Mammary epithelial cell (primary cell): ENCODE measurements at regions of chr13 and their contacts with region 1.

Region 1: DNA sequence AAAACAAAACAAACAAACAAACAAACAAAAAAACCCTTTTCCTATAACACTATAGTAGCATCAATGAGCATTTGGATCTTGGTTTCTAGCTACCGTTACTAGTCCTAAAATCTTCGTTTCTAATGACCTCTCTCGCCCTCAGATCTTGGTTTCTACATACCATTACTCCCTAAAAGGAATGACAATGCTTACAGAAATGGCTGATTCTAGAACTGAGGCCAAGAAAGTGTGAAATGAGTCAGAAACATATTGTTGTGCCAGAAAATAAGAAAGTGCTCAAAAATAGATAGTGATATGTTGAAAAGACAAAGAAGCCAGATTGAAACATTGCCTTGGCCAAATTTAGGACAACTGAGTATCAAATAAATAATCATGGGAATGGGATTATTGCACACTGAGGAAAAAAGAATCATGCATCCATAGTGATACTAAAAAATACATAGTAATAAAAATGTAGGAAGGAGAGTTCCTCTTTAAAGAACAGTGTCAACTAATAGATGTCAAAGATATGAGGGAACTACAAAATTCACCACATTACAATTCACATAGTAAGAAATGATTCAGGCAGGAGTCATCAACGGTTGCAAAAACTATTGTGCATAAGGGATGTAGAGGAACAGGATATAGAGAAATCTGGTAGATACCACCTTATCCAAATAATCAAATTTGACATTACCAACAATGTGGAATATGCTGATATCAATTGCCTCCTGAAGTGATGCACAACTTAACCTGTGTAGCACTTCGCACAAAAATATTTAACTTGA is 386.6 kb downstream of the DIAPH3 start:
- DNase-seq: peak; percentile 80
- H3K4me3 ChIP-seq: no peak overlapping the region
- H3K27ac ChIP-seq: peak overlapping the region; percentile 80
- H3K4me1 ChIP-seq: peaks cover 38% of the 10 kb centered on the region
- H3K27me3 ChIP-seq: no peaks in the 10 kb centered on the region
- CTCF ChIP-seq: no peak

Region 2: DNA sequence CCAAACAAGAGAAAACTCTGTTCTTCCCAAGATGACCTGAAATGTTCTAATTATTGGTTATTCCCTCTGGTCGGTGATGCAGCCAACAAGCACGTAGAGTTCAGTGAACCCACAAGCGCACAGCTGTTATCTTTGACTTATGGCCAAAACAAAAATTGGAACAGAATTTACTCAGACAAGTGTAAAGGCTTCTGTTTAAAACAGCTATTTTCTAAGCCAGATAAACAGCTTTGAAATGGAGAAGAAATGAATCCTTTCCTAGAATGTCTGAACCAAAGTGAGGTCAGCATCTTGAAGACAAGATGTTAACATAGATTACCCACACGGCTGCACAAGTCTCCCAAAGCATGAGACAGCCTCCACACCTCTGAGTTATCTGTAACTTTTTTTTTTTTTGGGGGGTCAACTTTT is 282.5 kb before region 1 on chr13:
- CTCF ChIA-PET with region 1: no interaction called
- dilution Hi-C with region 1: no loop called
- in situ Hi-C with region 1: no loop called
- intact Hi-C with region 1: no loop called
- DNase-seq: no peak
- H3K4me3 ChIP-seq: no peak overlapping the region
- H3K27ac ChIP-seq: no peak overlapping the region
- H3K4me1 ChIP-seq: no peaks in the 10 kb centered on the region
- H3K27me3 ChIP-seq: no peaks in the 10 kb centered on the region
- CTCF ChIP-seq: no peak

Region 3: GRCh38 chr13:59906413-59907049 is 129.4 kb after region 1 on chr13:
- CTCF ChIA-PET with region 1: no interaction called
- dilution Hi-C with region 1: no loop called
- in situ Hi-C with region 1: no loop called
- intact Hi-C with region 1: loop called (anchors 1 kb)
- DNase-seq: no peak
- H3K4me3 ChIP-seq: no peak overlapping the region
- H3K27ac ChIP-seq: no peak overlapping the region
- H3K4me1 ChIP-seq: no peaks in the 10 kb centered on the region
- H3K27me3 ChIP-seq: no peaks in the 10 kb centered on the region
- CTCF ChIP-seq: peak; percentile 41 to 72

Region 4: DNA sequence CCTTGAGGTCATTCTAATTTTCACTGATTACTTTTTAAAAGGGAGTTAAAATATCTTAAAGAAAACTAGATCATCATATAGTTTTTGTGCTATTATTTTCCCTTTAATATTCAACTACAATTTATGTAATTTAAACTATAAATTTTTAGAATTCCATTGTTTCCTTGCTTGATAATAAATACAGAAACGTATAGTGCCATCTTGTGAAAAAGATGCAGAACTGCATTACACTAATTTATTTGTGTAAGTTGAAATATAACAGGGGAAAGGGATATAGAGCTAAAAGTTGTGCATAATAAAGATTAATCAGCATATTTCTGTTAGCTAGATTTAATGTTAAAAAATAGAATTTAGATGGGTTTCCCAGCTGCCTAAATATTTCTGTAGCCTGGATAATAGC is 558.4 kb after region 1 on chr13:
- CTCF ChIA-PET with region 1: no interaction called
- dilution Hi-C with region 1: no loop called
- in situ Hi-C with region 1: no loop called
- intact Hi-C with region 1: no loop called
- DNase-seq: no peak
- H3K4me3 ChIP-seq: no peak overlapping the region
- H3K27ac ChIP-seq: no peak overlapping the region
- H3K4me1 ChIP-seq: no peaks in the 10 kb centered on the region
- H3K27me3 ChIP-seq: peaks cover 4% of the 10 kb centered on the region
- CTCF ChIP-seq: peak; percentile 52 to 60

Region 5: DNA sequence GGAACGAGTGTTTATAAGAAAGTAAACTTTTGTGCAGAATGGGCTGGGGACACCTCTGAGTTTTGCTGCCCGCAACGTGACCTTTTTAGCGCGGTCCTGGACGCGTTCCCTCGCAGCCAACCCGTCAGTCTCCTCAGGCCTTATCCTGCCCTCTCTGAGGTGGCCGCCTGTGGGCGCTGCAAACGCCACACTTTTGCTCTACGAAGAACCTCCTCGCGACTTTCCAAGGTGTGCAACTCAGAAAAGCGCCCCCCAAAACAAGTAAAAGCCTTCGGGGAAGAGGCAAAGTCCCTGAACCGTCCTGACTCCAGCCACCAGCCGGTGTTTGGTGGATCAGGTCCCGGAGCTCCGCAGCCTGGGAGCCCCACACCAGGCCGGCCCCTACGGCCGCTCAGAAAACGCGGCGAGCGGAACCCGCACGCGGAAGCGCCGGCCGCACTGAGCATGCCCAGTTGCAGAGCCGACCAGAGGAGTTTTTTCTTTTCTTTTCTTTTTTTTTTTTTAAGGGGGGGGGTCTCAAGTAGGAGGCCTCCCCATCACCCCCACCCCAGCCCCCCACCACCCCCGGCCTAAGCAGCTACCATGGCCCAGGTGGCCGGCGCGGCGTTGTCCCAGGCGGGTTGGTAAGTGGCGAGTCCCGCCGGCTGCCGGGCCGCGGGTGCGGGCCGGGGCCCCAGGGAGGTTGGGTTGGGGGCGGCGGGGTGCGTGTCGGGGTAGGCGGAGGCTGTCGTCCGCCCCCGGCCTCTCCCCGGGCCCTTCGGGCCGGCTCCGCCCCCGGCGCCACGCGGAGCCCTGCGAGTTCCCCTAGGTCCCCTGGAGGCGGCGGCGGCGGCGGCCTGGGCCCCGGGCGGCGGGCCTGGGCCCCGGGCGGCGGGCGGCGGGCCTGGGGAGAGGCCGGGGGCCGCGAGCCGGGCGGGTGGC is 619.9 kb after region 1 on chr13 and contains the start of gene TDRD3:
- CTCF ChIA-PET with region 1: no interaction called
- dilution Hi-C with region 1: no loop called
- in situ Hi-C with region 1: no loop called
- intact Hi-C with region 1: loop called (anchors 2 kb)
- DNase-seq: peak; percentile 82
- H3K4me3 ChIP-seq: peak within 1 kb of the TSS; percentile 64 to 97 (median 84)
- H3K27ac ChIP-seq: peak within 1 kb of the TSS; percentile 72
- H3K4me1 ChIP-seq: peaks cover 15% of the 10 kb centered on the region
- H3K27me3 ChIP-seq: no peaks in the 10 kb centered on the region
- CTCF ChIP-seq: peak; percentile 68 to 87
- total RNA-seq, gene TDRD3: 18.1 to 18.2 TPM